Activated B cell treated with CpG ODN at 0.5 μM for 24 hours (primary cell): ENCODE measurements at regions of chr1 and their contacts with region 1.

Region 1: GRCh38 chr1:171485375-171486047 is at the start of gene PRRC2C:
- DNase-seq: peak; percentile 81
- ATAC-seq: peak; percentile 86
- H3K4me3 Mint-ChIP-seq: peak within 1 kb of the TSS; percentile 94
- H3K27ac Mint-ChIP-seq: peak within 1 kb of the TSS; percentile 94
- H3K4me1 Mint-ChIP-seq: peaks cover 56% of the 10 kb centered on the region
- H3K27me3 Mint-ChIP-seq: no peaks in the 10 kb centered on the region
- CTCF ChIP-seq: no peak
- total RNA-seq, gene PRRC2C: 262 and 272 TPM in 2 replicates

Region 2: DNA sequence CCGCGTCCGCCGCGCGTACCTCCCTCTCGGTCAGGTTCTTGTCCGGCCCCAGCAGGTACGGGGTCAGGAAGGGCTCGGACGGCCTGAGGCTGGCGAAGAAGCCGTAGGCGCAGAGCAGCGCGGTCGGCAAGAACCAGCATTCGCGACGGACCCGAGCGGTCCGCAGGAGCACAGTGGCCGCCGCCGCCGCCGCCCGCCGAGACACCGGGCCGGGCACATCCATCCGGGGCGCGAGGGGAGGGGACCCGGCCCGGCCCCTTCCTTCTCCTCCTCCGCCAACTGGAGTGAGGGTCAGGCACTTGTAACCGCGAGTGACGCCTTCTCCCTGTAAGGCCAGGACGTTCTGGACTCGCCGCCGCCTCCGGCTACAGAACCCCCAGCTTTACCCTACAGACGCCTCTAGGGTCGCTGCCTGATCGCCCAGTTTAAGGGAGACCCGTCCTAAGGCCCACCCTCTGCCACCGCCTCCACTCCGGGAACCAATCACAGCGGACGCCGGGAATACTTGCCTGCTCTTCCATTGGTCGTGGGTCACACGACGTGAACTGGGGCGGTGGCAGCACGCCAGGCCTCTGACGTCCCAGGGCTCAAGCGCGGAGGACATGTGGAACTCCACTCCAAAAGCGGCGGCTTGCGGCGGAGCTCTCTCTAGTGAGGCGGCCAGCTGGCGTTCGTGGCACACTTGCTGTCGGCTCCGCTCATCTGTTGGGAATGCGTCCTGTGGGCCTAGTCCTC is 1999.8 kb before region 1 on chr1 and contains the start of gene SLC19A2:
- CTCF ChIA-PET with region 1: no interaction called
- POLR2A ChIA-PET with region 1: no interaction called
- intact Hi-C with region 1: loop called (anchors 10 kb)
- DNase-seq: peak; percentile 86
- ATAC-seq: peak; percentile 98
- H3K4me3 Mint-ChIP-seq: peak within 1 kb of the TSS; percentile 88
- H3K27ac Mint-ChIP-seq: peak within 1 kb of the TSS; percentile 82
- H3K4me1 Mint-ChIP-seq: peaks cover 27% of the 10 kb centered on the region
- H3K27me3 Mint-ChIP-seq: no peaks in the 10 kb centered on the region
- CTCF ChIP-seq: no peak
- total RNA-seq, gene SLC19A2: 3.0 and 3.6 TPM in 2 replicates

Region 3: GRCh38 chr1:169893494-169894362 is 1591.8 kb before region 1 on chr1 and contains the start of gene SCYL3:
- CTCF ChIA-PET with region 1: no interaction called
- POLR2A ChIA-PET with region 1: interaction called, 5 read pairs
- intact Hi-C with region 1: loop called (anchors 1 kb)
- DNase-seq: peak; percentile 82
- ATAC-seq: peak; percentile 87
- H3K4me3 Mint-ChIP-seq: peak within 1 kb of the TSS; percentile 88
- H3K27ac Mint-ChIP-seq: peak within 1 kb of the TSS; percentile 100
- H3K4me1 Mint-ChIP-seq: peaks cover 40% of the 10 kb centered on the region
- H3K27me3 Mint-ChIP-seq: peaks cover 4% of the 10 kb centered on the region
- CTCF ChIP-seq: no peak
- total RNA-seq, gene SCYL3: 14.5 and 16.2 TPM in 2 replicates

Region 4: GRCh38 chr1:171245458-171246064 is 239.9 kb before region 1 on chr1:
- CTCF ChIA-PET with region 1: no interaction called
- POLR2A ChIA-PET with region 1: no interaction called
- intact Hi-C with region 1: loop called (anchors 10 kb)
- DNase-seq: no peak
- ATAC-seq: peak; percentile 37
- H3K4me3 Mint-ChIP-seq: no peak overlapping the region
- H3K27ac Mint-ChIP-seq: no peak overlapping the region
- H3K4me1 Mint-ChIP-seq: no peaks in the 10 kb centered on the region
- H3K27me3 Mint-ChIP-seq: peaks cover 4% of the 10 kb centered on the region
- CTCF ChIP-seq: no peak

Region 5: DNA sequence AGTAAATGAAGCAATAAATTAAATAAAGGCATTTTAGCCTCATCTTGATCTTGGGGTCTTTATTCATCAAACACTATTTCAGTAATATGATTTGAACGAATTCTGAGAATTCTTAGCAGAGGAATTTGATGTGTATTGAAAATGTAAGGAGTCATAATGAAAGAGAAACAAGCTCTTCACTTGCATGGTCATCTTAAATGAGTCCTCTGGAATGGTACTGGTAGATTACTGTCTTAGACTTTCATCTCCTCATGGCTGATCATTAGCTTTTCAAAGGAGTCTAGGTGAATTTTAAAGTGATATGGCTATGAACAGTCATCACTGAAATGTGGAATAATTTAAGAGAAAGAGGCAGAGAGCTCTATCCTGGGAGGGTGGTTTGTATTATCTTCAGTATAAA is 29.8 kb after region 1 on chr1:
- CTCF ChIA-PET with region 1: interaction called, 10 read pairs
- POLR2A ChIA-PET with region 1: interaction called, 3 read pairs
- intact Hi-C with region 1: loop called (anchors 2 kb)
- DNase-seq: no peak
- ATAC-seq: no peak
- H3K4me3 Mint-ChIP-seq: no peak overlapping the region
- H3K27ac Mint-ChIP-seq: no peak overlapping the region
- H3K4me1 Mint-ChIP-seq: peaks cover 19% of the 10 kb centered on the region
- H3K27me3 Mint-ChIP-seq: no peaks in the 10 kb centered on the region
- CTCF ChIP-seq: no peak

Region 6: DNA sequence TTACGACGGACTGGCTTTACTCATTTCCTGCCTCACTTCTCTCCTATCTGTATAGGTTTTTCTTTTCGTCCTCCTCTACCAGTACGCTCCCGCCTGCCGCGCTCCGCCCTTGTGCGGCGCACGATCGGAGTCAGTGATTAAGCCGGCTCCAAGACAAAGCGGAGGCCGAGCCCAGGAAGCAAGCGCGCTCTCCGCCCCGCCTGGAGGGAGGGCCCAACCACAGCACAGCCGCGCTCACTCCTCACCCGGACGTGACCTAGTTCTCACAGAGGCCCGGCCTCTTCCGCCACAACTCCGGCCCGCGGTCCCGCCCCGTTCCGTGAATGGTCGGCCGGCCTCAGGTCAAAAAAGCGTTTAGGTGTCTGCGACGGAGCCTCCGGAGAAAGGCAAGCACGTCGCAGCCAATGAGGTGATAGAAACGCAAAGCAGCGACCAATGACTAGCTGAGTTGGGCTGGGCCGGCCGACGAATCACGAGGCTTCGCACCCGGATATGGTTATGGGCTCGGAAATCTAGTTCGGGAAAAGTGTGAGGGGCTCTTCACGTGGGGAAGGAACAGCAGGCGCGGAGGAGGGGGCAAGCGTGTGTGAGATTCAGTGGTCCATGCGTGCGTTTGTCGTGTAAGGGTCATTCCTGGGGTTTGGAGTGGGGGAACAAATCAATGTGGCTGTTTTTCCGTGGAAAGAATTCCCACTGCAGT is 295.8 kb after region 1 on chr1 and contains the start of gene METTL13:
- CTCF ChIA-PET with region 1: no interaction called
- POLR2A ChIA-PET with region 1: interaction called, 8 read pairs
- intact Hi-C with region 1: loop called (anchors 1 kb)
- DNase-seq: peak; percentile 91
- ATAC-seq: peak; percentile 94
- H3K4me3 Mint-ChIP-seq: peak within 1 kb of the TSS; percentile 99
- H3K27ac Mint-ChIP-seq: peak within 1 kb of the TSS; percentile 94
- H3K4me1 Mint-ChIP-seq: peaks cover 43% of the 10 kb centered on the region
- H3K27me3 Mint-ChIP-seq: peaks cover 6% of the 10 kb centered on the region
- CTCF ChIP-seq: no peak
- total RNA-seq, gene METTL13: 33.6 and 35.7 TPM in 2 replicates